ENCODE measurements at regions of chr9 and their contacts with region 1.

Region 1: GRCh38 chr9:23290973-23291372 is 535.1 kb downstream of the ELAVL2 start:
- DNase-seq: no peak
- H3K4me3 ChIP-seq: no peak overlapping the region
- H3K27ac ChIP-seq: no peak overlapping the region
- H3K4me1 ChIP-seq: no peaks in the 10 kb centered on the region
- H3K27me3 ChIP-seq: no peaks in the 10 kb centered on the region
- CTCF ChIP-seq: no peak
- POLR2A ChIP-seq: no peak

Region 2: GRCh38 chr9:23302281-23302680 is 11.3 kb after region 1 on chr9:
- intact Hi-C with region 1: loop called (anchors 1 kb)
- DNase-seq: no peak
- H3K4me3 ChIP-seq: no peak overlapping the region
- H3K27ac ChIP-seq: no peak overlapping the region
- H3K4me1 ChIP-seq: no peaks in the 10 kb centered on the region
- H3K27me3 ChIP-seq: no peaks in the 10 kb centered on the region
- CTCF ChIP-seq: no peak
- POLR2A ChIP-seq: no peak

Region 3: DNA sequence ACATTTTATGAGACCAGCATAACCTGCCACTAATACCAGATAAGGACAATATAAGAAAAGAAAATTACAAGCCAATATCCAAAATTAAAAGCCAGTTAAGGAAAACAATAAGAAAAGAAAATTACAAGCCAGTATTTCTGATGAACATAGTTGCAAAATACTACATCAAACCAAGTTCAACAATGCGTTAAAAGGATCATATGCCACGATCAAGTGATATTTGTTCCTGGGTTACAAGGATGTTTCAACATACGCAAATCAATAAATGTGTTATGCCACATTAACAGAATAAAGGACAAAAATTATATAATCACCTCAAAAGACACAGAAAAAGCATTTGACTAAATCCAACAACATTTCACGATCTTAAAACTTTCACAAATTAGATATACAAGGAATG is 103.2 kb after region 1 on chr9:
- intact Hi-C with region 1: no loop called
- DNase-seq: no peak
- H3K4me3 ChIP-seq: no peak overlapping the region
- H3K27ac ChIP-seq: no peak overlapping the region
- H3K4me1 ChIP-seq: no peaks in the 10 kb centered on the region
- H3K27me3 ChIP-seq: no peaks in the 10 kb centered on the region
- CTCF ChIP-seq: no peak
- POLR2A ChIP-seq: no peak

Measured in breast epithelium (tissue), 4 donors.